A673 (cell line): ENCODE measurements at regions of chr20 and their contacts with region 1.

Region 1: GRCh38 chr20:31497838-31498535 is 16.3 kb upstream of the HM13 start:
- DNase-seq: no peak
- H3K4me3 ChIP-seq: no peak overlapping the region
- H3K27ac ChIP-seq: no peak overlapping the region
- H3K4me1 ChIP-seq: no peaks in the 10 kb centered on the region
- H3K27me3 ChIP-seq: no peaks in the 10 kb centered on the region
- CTCF ChIP-seq: no peak

Region 2: DNA sequence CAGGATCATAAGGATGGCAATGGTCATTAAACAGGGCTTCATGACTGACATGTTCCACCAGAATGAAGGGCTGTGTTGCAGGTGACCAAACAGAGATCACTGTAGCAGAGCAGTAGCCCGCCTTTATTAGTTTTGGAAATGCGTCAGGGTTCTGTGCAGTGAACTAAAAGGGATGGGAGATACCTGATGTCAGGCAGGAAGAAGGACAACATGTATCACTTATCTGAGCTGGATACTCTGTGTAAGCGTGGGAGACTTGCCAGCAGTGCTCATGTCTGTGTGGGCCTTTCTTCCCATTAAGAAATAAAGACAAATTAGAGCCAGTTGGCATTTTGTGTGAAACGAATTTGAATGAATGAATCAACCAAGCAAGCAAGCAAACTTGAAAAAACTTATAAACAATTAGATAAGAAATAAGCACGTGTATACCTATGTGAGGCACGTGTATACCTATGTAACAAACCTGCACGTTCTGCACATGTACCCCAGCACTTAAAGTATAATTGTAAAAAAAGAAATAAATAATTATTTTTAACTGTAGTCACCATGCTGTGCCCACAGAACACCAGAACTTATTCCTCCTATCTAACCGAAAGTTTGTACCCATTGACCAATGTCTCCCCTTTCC is 189.3 kb before region 1 on chr20 and contains the start of gene DEFB116:
- CTCF ChIA-PET with region 1: no interaction called
- POLR2A ChIA-PET with region 1: no interaction called
- intact Hi-C with region 1: loop called (anchors 1 kb)
- DNase-seq: no peak
- H3K4me3 ChIP-seq: no peak within 1 kb of the TSS
- H3K27ac ChIP-seq: no peak within 1 kb of the TSS
- H3K4me1 ChIP-seq: no peaks in the 10 kb centered on the region
- H3K27me3 ChIP-seq: no peaks in the 10 kb centered on the region
- CTCF ChIP-seq: no peak
- total RNA-seq, gene DEFB116: not detected in 2 replicates

Region 3: DNA sequence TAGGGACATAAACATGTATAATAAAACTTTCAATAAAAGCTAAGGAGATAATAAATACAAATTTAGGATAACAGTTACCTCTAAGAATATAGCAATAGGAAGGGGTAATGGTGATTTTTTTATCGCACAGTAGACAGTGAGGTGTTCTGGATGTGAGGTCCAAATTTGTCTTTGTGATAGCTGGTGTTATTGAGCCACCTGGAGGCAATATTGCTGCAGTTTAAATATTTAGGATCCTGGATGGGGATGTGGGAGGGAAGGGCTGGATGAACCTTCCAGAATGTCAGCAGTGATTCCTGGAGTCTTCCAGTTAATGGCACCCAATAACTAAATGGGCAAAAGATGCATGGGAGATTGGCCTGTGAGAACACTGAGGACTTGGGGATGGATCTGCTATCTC is 43.6 kb before region 1 on chr20:
- CTCF ChIA-PET with region 1: interaction called, 29 read pairs
- POLR2A ChIA-PET with region 1: no interaction called
- intact Hi-C with region 1: no loop called
- DNase-seq: no peak
- H3K4me3 ChIP-seq: no peak overlapping the region
- H3K27ac ChIP-seq: no peak overlapping the region
- H3K4me1 ChIP-seq: no peaks in the 10 kb centered on the region
- H3K27me3 ChIP-seq: peaks cover 4% of the 10 kb centered on the region
- CTCF ChIP-seq: no peak

Region 4: DNA sequence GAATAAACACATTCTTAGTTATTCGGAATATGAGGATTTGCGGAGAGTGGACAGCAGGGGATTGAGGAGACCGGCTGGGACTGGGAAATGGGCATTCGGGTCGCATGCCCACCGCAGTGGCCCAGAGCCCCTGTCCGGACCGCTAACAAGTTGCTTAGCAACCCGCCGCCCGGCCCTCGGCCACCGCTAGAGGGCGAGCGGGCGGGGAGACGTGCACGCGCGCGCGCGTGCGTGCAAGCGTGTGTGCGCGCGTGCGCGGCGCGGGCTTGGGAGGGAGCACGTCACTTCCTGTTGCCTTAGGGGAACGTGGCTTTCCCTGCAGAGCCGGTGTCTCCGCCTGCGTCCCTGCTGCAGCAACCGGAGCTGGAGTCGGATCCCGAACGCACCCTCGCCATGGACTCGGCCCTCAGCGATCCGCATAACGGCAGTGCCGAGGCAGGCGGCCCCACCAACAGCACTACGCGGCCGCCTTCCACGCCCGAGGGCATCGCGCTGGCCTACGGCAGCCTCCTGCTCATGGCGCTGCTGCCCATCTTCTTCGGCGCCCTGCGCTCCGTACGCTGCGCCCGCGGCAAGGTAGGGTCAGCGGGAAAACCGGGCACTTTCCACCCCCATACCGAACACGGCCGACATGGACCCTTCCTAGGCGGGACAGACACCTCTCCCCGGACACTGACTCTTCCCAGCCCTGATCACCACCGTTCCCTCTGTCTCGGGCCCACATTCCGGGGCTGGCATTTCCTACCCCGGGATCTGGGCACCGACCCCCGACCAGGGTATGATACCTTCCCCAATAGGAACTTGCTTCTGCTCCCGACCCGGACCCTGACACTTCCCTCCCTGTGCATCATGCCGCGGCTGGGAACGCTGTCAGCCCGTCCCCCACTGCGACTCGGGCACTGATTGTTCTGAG is 16.4 kb after region 1 on chr20 and contains the start of gene HM13:
- CTCF ChIA-PET with region 1: interaction called, 10 read pairs
- POLR2A ChIA-PET with region 1: no interaction called
- intact Hi-C with region 1: no loop called
- DNase-seq: peak; percentile 96
- H3K4me3 ChIP-seq: peak within 1 kb of the TSS; percentile 90
- H3K27ac ChIP-seq: peak within 1 kb of the TSS; percentile 86
- H3K4me1 ChIP-seq: peaks cover 13% of the 10 kb centered on the region
- H3K27me3 ChIP-seq: no peaks in the 10 kb centered on the region
- CTCF ChIP-seq: peak; percentile 81
- total RNA-seq, gene HM13: 182 and 196 TPM in 2 replicates